ENCODE measurements at regions of chr4 and their contacts with region 1.

Region 1: DNA sequence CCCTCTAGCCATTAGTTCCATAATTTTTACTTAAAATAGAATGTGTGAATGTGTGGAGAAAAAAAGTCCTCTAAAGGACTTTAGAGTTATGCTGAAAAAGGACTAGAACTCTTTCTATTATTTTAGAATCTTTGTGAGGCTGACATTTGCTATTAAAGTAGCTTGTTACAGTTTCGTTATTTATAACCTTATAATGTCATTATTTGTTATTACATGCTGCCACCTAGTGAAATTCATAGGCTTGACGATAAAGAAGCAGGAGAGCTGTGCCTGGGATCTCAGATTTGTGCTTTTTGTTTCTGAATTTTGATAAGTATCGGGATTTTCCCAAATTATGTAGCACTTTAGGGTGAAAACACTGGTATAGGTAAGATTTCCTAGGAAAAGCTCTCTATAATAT is 38.5 kb upstream of the TAPT1 start:
- DNase-seq: peak in 5 of 42 donors; percentile 5 to 32 (median 15)

Region 2: GRCh38 chr4:15882675-15883086 is 382.1 kb before region 1 on chr4:
- intact Hi-C with region 1: loop called (anchors 10 kb)
- DNase-seq: peak in 38 of 42 donors; percentile 9 to 75 (median 42)

Region 3: DNA sequence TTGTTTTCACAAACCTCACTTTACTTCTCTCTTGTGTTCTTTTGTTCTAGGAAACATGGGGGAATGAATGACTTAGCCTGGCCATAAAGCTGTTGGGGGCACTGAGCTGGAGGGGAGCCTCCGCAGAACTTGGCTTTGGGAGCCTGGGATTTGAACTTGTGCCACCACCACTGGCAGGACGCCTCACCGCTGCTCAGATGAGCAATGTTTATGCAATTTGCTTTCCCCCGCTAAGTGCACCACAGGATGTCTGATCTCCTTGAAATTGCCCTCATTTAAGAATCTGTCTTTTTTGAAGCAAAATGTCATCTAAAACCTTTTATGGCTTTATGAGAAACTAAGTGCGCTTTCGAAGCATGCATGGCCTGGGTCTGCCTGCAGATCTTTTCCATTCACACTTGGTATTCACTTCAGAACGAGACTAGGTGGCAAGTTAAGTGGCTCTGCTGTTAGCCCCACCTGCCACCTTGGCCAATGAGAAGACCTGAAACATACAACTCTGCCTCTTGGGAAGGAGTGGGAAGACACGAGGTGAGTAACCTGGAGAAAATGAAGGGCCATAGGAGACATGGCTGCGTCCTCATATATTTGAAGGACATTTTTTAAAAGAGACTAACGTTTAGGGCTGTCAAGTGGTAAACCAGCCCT is 514.4 kb after region 1 on chr4:
- intact Hi-C with region 1: no loop called
- DNase-seq: no peak

Measured in head of caudate nucleus (tissue), 42 donors.